ENCODE measurements at regions of chr3 and their contacts with region 1.

Region 1: DNA sequence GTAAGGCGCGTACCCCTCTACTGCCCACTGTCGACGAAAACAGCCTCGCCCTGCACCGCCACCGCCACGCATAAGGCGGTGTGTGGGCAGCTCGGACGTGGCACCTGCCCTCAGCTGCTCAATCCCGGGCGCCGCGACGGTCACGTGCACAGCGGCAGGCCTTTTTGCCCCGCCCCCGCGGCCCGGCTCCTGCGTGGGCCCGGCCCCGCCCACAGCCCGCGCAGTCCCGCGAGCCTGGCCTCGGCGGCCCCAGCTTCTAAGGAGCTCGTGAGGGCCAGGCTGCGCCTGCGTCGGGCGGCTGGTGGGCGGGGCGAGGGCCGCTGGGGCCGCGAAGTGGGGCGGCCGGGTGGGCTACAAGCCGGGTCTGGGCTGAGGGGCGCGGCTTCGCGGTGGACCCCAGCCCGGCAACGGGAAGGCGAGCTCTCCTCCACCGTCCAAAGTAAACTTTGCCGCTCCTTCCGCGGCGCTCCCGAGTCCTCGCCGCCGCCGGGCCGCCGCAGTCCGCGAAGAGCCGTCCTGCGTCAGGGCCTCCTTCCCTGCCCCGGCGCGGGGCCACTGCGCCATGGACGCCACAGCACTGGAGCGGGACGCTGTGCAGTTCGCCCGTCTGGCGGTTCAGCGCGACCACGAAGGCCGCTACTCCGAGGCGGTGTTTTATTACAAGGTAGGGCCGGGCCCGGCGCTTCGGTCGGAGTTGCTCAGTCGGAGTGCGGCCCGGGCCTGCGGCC is at the start of gene CAPN7:
- DNase-seq: peak; percentile 96
- H3K4me3 Mint-ChIP-seq: peak within 1 kb of the TSS; percentile 82
- H3K27ac Mint-ChIP-seq: peak within 1 kb of the TSS; percentile 91
- H3K4me1 Mint-ChIP-seq: peaks cover 32% of the 10 kb centered on the region
- H3K27me3 Mint-ChIP-seq: no peaks in the 10 kb centered on the region
- total RNA-seq, gene CAPN7: 29.6 to 30.1 TPM

Region 2: DNA sequence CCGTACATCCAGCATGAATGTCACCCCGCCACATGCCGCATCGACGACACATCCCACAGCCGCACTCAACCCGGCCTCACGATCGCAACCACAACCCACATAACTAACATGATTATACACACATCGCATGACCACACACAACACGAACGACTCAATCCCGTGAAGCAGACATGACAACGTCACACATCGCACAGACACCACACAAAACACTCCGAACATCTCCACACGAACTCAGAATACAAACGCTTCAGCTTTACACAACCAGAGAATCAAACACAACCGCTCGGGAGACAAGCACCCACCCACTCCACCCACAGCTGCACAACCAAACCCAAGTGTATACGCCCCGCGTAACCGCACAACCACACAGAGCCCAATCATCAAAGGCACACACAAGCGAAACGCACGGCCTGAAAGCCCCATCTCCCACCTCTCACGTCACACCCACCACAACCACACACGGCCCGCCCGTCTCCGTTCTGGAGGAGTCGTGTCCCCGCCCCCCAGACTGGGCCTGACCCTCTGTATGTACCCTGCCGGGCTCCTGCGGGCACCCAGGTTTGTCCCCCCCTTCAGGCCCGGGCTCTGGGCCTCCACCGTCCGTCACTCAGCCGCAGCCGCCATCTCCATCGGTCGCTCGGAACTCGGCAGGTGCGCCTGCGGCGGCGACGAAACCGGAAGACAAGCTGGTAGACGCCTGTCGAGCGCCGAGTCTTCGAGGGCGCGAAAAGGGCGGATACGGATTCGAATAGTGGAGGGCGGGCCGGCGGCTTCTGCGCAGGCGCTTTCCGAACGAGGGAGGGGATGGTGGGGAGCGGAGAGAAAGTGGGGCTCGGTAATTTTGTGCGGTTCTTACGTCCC is 107.4 kb before region 1 on chr3 and contains the start of gene RBSN:
- CTCF ChIA-PET with region 1: interaction called, 6 read pairs
- POLR2A ChIA-PET with region 1: interaction called, 14 read pairs
- DNase-seq: peak; percentile 97
- H3K4me3 Mint-ChIP-seq: peak within 1 kb of the TSS; percentile 95
- H3K27ac Mint-ChIP-seq: peak within 1 kb of the TSS; percentile 99
- H3K4me1 Mint-ChIP-seq: peaks cover 55% of the 10 kb centered on the region
- H3K27me3 Mint-ChIP-seq: no peaks in the 10 kb centered on the region
- total RNA-seq, gene RBSN: 19.4 to 19.7 TPM

Region 3: GRCh38 chr3:15108082-15108545 is 98.0 kb before region 1 on chr3:
- CTCF ChIA-PET with region 1: interaction called, 43 read pairs
- POLR2A ChIA-PET with region 1: interaction called, 3 read pairs
- DNase-seq: peak; percentile 77
- H3K4me3 Mint-ChIP-seq: no peak overlapping the region
- H3K27ac Mint-ChIP-seq: no peak overlapping the region
- H3K4me1 Mint-ChIP-seq: peaks cover 1% of the 10 kb centered on the region
- H3K27me3 Mint-ChIP-seq: peaks cover 11% of the 10 kb centered on the region

Region 4: DNA sequence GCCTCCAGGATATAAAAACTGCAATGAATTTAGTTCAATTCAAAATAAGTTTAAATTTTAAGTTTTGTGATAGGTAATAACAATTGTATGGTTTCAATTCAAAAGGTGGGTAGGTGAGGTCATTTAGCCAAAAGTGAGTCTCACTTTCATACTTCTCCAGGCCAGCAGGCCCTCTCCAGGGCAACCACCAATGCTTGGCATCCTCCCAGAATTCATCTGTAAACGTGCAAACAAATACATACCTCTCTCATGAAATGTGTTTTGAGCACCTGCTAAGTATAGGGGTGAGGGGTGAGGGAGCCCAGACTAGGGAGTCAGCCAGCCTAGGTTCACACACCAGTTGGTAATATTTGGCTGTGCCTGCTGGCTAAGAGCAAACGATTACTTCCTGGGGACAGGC is 85.1 kb before region 1 on chr3:
- CTCF ChIA-PET with region 1: interaction called, 93 read pairs
- POLR2A ChIA-PET with region 1: no interaction called
- DNase-seq: no peak
- H3K4me3 Mint-ChIP-seq: no peak overlapping the region
- H3K27ac Mint-ChIP-seq: no peak overlapping the region
- H3K4me1 Mint-ChIP-seq: peaks cover 17% of the 10 kb centered on the region
- H3K27me3 Mint-ChIP-seq: peaks cover 3% of the 10 kb centered on the region

Region 5: GRCh38 chr3:15217841-15218267 is 11.8 kb after region 1 on chr3:
- CTCF ChIA-PET with region 1: interaction called, 7 read pairs
- POLR2A ChIA-PET with region 1: interaction called, 14 read pairs
- DNase-seq: no peak
- H3K4me3 Mint-ChIP-seq: no peak overlapping the region
- H3K27ac Mint-ChIP-seq: no peak overlapping the region
- H3K4me1 Mint-ChIP-seq: no peaks in the 10 kb centered on the region
- H3K27me3 Mint-ChIP-seq: no peaks in the 10 kb centered on the region

Region 6: GRCh38 chr3:15405448-15406050 is 199.5 kb after region 1 on chr3:
- CTCF ChIA-PET with region 1: interaction called, 78 read pairs
- POLR2A ChIA-PET with region 1: interaction called, 10 read pairs
- DNase-seq: peak; percentile 22
- H3K4me3 Mint-ChIP-seq: no peak overlapping the region
- H3K27ac Mint-ChIP-seq: no peak overlapping the region
- H3K4me1 Mint-ChIP-seq: peaks cover 12% of the 10 kb centered on the region
- H3K27me3 Mint-ChIP-seq: no peaks in the 10 kb centered on the region

Region 7: GRCh38 chr3:15557511-15557946 is 351.4 kb after region 1 on chr3:
- CTCF ChIA-PET with region 1: interaction called, 20 read pairs
- POLR2A ChIA-PET with region 1: interaction called, 6 read pairs
- DNase-seq: peak; percentile 81
- H3K4me3 Mint-ChIP-seq: no peak overlapping the region
- H3K27ac Mint-ChIP-seq: peak overlapping the region; percentile 66
- H3K4me1 Mint-ChIP-seq: peaks cover 22% of the 10 kb centered on the region
- H3K27me3 Mint-ChIP-seq: no peaks in the 10 kb centered on the region